H1 (cell line): ENCODE measurements at regions of chr11 and their contacts with region 1.

Region 1: DNA sequence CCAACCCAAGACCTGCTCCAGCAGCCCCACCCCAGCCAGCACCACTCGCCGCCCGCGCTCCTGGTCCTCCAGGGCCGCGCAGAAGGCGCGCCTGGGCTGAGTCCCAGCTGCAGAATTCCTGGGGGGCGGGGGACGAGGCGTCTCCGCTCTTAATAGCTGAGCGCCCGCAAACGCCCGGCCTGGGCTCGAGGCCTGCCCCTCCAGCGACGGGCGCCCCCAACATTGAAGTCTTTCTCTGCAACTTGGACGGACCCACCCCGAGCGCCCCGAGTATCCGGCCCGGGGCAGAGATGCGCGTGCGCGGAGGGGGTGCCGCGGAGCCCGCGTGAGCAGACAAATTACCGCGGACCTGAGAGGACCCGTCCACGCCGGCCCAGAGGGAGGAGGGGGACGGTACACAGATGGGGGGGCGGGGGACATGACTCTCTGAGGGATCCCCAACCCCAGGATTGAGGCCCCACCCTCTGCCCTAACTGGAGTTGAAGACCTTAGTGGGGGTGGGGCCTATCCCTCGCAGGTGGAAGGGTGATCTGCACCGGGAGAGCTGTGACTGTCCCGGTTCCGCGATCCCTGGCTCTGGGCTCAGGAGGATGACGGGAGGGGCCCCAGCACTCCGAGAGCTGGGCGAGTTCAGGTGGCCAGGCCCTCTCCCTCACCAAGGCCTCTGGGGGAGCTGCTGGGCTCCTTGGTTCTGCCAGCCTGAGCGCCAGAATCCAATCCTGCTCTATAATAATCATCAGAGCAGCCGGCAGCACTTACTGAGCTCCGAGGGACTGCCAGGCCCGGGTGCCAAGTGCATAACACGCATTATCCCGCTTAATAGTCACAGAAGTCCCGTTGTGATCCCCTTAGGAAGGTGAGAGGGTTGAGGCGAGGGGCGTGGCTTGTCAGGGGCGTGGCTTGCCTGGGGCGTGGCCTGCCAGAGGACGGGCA is 6.9 kb upstream of the SYT7 start:
- DNase-seq: peak in 1 of 2 experiments; percentile 99
- H3K4me3 ChIP-seq: peak overlapping the region; percentile 40 to 68 (median 54)
- H3K27ac ChIP-seq: no peak overlapping the region
- H3K4me1 ChIP-seq: peaks cover 0 to 18% (median 14%) of the 10 kb centered on the region in 4 experiments; a peak in 6 of 7 replicates
- H3K27me3 ChIP-seq: peaks cover 0 to 21% (median 11%) of the 10 kb centered on the region in 4 experiments; a peak in 3 of 7 replicates
- CTCF ChIP-seq: peak; percentile 29 to 45 (median 44)
- EP300 ChIP-seq: no peak
- POLR2A ChIP-seq: no peak
- RAD21 ChIP-seq: peak in 1 of 2 experiments; percentile 32; a peak in 2 of 4 replicates

Region 2: DNA sequence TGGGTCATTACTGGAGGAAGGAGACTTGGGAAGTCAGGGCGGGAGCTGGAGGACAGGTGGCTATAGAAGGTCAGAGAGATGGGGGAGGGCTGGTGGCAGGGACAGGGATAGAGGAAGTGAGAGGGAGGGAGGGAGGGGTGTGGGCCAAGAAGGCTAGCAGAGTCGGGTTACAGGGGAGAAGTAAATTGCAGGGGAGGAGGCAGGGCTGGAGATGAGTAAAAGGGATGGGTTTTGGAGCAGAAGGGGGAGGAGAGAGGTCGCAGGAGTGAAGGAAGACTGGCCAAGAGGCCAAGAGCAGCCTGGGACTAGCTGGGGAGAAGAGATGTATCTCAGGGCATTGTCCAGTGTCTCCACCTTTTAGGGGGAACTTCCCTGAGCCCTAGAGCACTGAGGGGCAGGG is 46.2 kb before region 1 on chr11:
- CTCF ChIA-PET with region 1: interaction called, 12 read pairs
- POLR2A ChIA-PET with region 1: no interaction called
- DNase-seq: no peak
- H3K4me3 ChIP-seq: no peak overlapping the region
- H3K27ac ChIP-seq: no peak overlapping the region
- H3K4me1 ChIP-seq: peaks cover 5 to 35% (median 18%) of the 10 kb centered on the region in 4 experiments
- H3K27me3 ChIP-seq: no peaks in the 10 kb centered on the region; a peak in 1 of 7 replicates
- CTCF ChIP-seq: no peak
- EP300 ChIP-seq: no peak
- POLR2A ChIP-seq: no peak
- RAD21 ChIP-seq: no peak

Region 3: GRCh38 chr11:61602775-61603569 is 15.2 kb after region 1 on chr11:
- CTCF ChIA-PET with region 1: interaction called, 52 read pairs
- POLR2A ChIA-PET with region 1: interaction called, 34 read pairs
- DNase-seq: no peak
- H3K4me3 ChIP-seq: no peak overlapping the region
- H3K27ac ChIP-seq: no peak overlapping the region
- H3K4me1 ChIP-seq: peaks cover 5 to 22% (median 18%) of the 10 kb centered on the region in 4 experiments
- H3K27me3 ChIP-seq: no peaks in the 10 kb centered on the region; a peak in 1 of 7 replicates
- CTCF ChIP-seq: no peak
- EP300 ChIP-seq: no peak
- POLR2A ChIP-seq: no peak
- RAD21 ChIP-seq: no peak

Region 4: DNA sequence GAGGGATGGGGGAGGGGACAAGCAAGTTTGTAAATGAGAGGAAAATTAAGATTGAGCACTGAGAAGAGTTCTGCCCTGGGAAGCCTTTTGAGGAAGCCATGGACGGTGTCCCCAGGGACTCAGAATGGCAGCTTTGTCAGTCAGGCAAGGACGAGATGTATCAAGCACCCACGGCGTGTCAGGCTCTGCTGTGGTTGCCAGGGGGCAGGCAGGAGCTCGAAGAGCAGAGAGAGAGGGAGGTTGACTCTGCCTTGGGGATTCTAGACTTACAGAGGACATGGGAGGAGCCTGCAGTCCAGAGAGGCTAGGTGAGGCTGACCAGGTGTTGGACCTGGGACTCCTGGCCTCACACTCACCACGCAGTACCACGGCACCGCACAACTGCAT is 22.2 kb after region 1 on chr11:
- CTCF ChIA-PET with region 1: interaction called, 335 read pairs
- POLR2A ChIA-PET with region 1: interaction called, 5 read pairs
- DNase-seq: no peak
- H3K4me3 ChIP-seq: no peak overlapping the region
- H3K27ac ChIP-seq: no peak overlapping the region
- H3K4me1 ChIP-seq: peaks cover 0 to 3% (median 2%) of the 10 kb centered on the region in 4 experiments; a peak in 4 of 7 replicates
- H3K27me3 ChIP-seq: no peaks in the 10 kb centered on the region
- CTCF ChIP-seq: peak; percentile 72 to 75 (median 75)
- EP300 ChIP-seq: no peak
- POLR2A ChIP-seq: no peak
- RAD21 ChIP-seq: peak; percentile 54 to 72

Region 5: GRCh38 chr11:61891331-61892084 is 303.7 kb after region 1 on chr11 and contains the start of gene FADS3:
- CTCF ChIA-PET with region 1: no interaction called
- POLR2A ChIA-PET with region 1: no interaction called
- DNase-seq: peak; percentile 73 to 93
- H3K4me3 ChIP-seq: peak within 1 kb of the TSS; percentile 69 to 81 (median 74)
- H3K27ac ChIP-seq: no peak within 1 kb of the TSS
- H3K4me1 ChIP-seq: peaks cover 0 to 11% (median 8%) of the 10 kb centered on the region in 4 experiments; a peak in 6 of 7 replicates
- H3K27me3 ChIP-seq: no peaks in the 10 kb centered on the region
- CTCF ChIP-seq: no peak
- EP300 ChIP-seq: no peak
- POLR2A ChIP-seq: no peak; a peak in 1 of 3 replicates
- RAD21 ChIP-seq: no peak
- total RNA-seq, gene FADS3: 40.2 and 43.8 TPM in 2 replicates